ENCODE measurements at regions of chr4 and their contacts with region 1.

Region 1: GRCh38 chr4:36651253-36651652 is 369.8 kb downstream of the DTHD1 start:
- DNase-seq: peak; percentile 3
- H3K4me3 ChIP-seq: no peak overlapping the region
- H3K27ac ChIP-seq: no peak overlapping the region
- H3K4me1 ChIP-seq: no peaks in the 10 kb centered on the region
- H3K27me3 ChIP-seq: no peaks in the 10 kb centered on the region
- CTCF ChIP-seq: no peak

Region 2: DNA sequence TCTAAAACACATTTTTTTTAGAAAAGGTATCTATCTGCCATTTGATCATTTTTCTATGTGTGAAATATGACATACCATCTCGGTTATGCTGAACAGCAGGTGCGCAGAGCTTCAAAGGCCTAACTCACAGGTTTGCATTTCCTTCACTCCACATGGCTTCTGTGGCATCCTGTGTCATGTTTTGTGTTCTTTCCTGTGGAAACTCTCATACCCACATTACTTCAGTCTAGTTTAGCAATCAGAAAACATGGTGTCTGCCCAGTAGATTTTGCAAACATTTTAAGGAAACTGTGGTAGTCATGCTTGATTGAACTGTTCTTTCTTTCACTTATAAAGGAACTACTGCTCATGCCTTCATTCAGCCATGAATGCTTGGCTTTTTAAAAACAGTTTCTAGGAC is 395.7 kb before region 1 on chr4:
- CTCF ChIA-PET with region 1: interaction called, 20 read pairs
- dilution Hi-C with region 1: no loop called
- in situ Hi-C with region 1: no loop called
- intact Hi-C with region 1: no loop called
- DNase-seq: no peak
- H3K4me3 ChIP-seq: no peak overlapping the region
- H3K27ac ChIP-seq: no peak overlapping the region
- H3K4me1 ChIP-seq: no peaks in the 10 kb centered on the region
- H3K27me3 ChIP-seq: no peaks in the 10 kb centered on the region
- CTCF ChIP-seq: no peak